Activated CD4-positive, alpha-beta T cell treated with anti-CD3 and anti-CD28 coated beads, Interleukin-2, amount 10 ng/mL, durations not matched to agents 24 days and 14 days (primary cell): ENCODE measurements at regions of chr2 and their contacts with region 1.

Region 1: DNA sequence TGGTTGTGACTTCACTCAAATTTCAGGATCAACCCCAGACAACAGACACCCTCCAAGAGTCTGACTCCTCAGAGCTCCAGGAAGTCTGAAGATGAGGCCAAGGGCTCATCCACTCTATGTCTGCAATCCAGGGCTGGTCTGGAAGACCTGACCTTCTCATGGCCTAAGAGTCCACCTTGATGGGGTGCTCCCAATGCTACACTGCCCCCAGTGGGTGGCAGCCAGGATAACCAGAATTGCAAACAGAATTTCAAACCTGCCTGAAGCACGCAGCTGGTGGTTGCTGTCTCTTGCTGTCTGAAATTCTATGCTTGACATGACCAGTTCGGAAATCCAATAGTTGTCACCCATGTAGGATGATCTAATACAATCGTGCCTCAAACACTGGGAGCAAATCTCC is 96.0 kb downstream of the UXS1 start:
- DNase-seq: peak; percentile 75
- H3K4me3 Mint-ChIP-seq: no peak overlapping the region
- H3K27ac Mint-ChIP-seq: no peak overlapping the region
- H3K4me1 Mint-ChIP-seq: peaks cover 27% of the 10 kb centered on the region
- H3K27me3 Mint-ChIP-seq: no peaks in the 10 kb centered on the region

Region 2: GRCh38 chr2:105337124-105338019 is 760.7 kb before region 1 on chr2 and contains the start of gene C2orf49:
- intact Hi-C with region 1: loop called (anchors 10 kb)
- DNase-seq: peak; percentile 97
- H3K4me3 Mint-ChIP-seq: peak within 1 kb of the TSS; percentile 92
- H3K27ac Mint-ChIP-seq: peak within 1 kb of the TSS; percentile 100
- H3K4me1 Mint-ChIP-seq: peaks cover 22% of the 10 kb centered on the region
- H3K27me3 Mint-ChIP-seq: no peaks in the 10 kb centered on the region
- total RNA-seq, gene C2orf49: 20.8 and 25.5 TPM in 2 replicates

Region 3: GRCh38 chr2:105460048-105460732 is 637.9 kb before region 1 on chr2:
- intact Hi-C with region 1: no loop called
- DNase-seq: no peak
- H3K4me3 Mint-ChIP-seq: no peak overlapping the region
- H3K27ac Mint-ChIP-seq: no peak overlapping the region
- H3K4me1 Mint-ChIP-seq: no peaks in the 10 kb centered on the region
- H3K27me3 Mint-ChIP-seq: peaks cover 2% of the 10 kb centered on the region

Region 4: DNA sequence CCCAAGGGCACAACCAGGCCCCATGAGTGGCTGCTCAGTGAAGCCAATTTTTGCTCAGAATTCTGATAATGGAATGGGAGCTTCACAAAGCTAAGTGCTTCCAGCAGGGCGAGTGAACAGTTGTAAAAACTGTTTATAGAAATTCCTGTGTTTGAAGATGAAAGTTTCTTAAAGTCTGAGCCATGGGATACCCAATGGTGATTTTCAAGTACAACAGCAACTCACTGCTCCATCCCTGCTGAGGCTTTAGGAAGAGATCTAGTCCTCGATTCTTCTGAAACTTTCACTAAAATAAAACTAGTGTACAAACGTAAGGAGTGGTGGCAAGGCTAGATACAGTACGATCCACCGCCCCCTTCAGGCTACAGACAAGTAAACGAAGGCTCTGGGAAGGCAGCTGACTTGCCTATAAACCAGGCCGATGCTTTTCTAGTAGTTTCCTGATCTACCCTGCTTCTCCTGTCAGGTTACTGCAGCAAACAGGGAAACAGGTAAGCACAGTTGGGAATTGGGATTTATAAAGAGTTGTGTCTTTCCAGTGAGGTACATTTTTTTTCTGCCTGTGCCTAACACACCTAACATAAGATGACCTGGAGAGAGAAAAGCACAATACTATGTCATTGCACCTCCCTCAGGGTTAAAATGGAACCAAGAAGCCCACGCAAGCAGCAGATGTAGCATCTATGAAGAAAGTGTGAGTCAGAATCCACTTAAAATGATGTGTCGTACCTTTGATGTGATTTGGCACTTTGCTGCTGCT is 12.7 kb before region 1 on chr2:
- intact Hi-C with region 1: loop called (anchors 1 kb)
- DNase-seq: peak; percentile 86
- H3K4me3 Mint-ChIP-seq: peak overlapping the region; percentile 60
- H3K27ac Mint-ChIP-seq: peak overlapping the region; percentile 73
- H3K4me1 Mint-ChIP-seq: peaks cover 28% of the 10 kb centered on the region
- H3K27me3 Mint-ChIP-seq: no peaks in the 10 kb centered on the region

Region 5: GRCh38 chr2:106232638-106233349 is 134.7 kb after region 1 on chr2:
- intact Hi-C with region 1: no loop called
- DNase-seq: no peak
- H3K4me3 Mint-ChIP-seq: no peak overlapping the region
- H3K27ac Mint-ChIP-seq: no peak overlapping the region
- H3K4me1 Mint-ChIP-seq: no peaks in the 10 kb centered on the region
- H3K27me3 Mint-ChIP-seq: peaks cover 8% of the 10 kb centered on the region